Sciatic nerve (tissue), 2 donors: ENCODE measurements at regions of chr19 and their contacts with region 1.

Region 1: DNA sequence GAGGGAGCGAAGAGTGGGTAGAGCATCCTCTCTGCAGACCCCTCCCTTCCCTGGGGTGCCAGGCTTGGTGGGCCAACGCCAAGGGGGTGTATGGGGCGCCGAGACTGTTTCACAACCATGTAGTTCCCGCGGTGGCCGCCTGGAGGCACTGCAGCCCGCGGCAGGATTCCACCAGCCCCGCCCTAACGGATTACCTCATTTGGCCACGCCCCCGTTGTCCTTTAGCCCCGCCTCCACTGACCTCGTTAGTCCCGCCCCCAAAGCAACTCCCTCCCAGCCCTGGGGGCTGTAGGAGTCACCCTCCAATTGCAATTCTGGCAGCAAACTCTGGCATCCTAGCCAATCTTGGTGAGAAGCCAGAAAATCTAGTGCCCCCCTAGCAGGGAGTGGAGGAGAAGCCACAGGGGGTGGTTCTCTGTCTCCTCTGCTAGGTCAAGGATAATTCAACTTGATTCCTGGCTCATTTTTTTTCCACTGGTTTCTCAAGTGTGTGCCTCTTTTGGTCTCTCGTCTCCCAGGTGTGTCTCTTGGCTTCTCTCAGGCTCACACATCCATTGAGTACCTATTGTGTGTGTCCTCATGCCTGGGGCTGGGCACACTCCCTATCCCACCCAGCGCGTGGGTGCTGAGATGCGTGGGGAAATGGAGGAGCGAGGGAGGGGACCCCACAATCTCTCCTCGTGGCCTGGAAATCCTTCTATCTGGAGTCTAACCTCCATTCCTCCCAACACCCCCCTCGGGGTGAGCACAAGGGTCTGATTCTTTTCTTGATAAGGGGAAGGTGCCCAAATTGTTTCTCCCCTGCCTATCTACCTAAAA is 2.0 kb downstream of the OLFM2 start:
- DNase-seq: peak; percentile 90
- ATAC-seq: peak; percentile 89

Region 2: GRCh38 chr19:9498183-9498902 is 436.0 kb before region 1 on chr19 and contains the start of gene ZNF560:
- intact Hi-C with region 1: no loop called
- DNase-seq: no peak
- ATAC-seq: no peak
- total RNA-seq, gene ZNF560: not detected

Region 3: GRCh38 chr19:10027158-10027693 is 92.9 kb after region 1 on chr19:
- intact Hi-C with region 1: loop called (anchors 5 kb)
- DNase-seq: no peak
- ATAC-seq: peak; percentile 9

Region 4: DNA sequence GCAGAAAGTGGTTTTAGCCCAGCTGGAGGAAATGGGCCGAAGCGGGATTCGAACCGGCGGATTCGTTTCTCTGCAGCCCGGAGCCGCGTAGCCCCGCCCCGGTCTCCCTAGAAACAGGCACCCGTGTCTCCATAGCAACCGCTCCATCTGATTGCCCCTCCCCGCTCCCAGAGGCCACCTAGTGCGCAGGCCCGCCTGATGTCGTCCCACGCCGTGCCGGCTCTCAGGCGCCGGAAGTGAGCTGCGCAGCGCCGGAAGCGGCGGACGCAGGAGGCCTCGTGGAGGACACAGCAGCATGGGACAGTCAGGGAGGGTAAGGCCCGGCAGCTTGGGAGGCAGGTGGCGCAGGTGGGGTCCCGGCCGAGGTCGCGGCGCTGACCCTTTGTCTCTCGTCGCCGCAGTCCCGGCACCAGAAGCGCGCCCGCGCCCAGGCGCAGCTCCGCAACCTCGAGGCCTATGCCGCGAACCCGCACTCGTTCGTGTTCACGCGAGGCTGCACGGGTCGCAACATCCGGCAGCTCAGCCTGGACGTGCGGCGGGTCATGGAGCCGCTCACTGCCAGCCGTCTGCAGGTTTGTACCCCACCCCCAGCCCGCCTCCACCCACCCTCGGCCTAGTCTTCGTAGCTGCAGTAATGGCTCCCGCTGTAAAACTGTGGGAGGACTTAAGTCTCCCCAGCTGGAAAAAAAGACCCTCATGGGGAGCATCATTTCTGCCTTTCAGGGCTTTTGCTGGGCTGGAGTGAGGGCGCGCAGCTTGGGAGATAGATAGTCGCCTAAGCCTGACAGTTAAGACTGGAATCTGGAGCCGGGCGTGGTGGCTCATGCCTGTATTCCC is 172.0 kb after region 1 on chr19 and contains the start of gene PPAN:
- intact Hi-C with region 1: loop called (anchors 10 kb)
- DNase-seq: peak; percentile 99
- ATAC-seq: peak; percentile 99
- total RNA-seq, gene PPAN: 31.3 TPM

Region 5: DNA sequence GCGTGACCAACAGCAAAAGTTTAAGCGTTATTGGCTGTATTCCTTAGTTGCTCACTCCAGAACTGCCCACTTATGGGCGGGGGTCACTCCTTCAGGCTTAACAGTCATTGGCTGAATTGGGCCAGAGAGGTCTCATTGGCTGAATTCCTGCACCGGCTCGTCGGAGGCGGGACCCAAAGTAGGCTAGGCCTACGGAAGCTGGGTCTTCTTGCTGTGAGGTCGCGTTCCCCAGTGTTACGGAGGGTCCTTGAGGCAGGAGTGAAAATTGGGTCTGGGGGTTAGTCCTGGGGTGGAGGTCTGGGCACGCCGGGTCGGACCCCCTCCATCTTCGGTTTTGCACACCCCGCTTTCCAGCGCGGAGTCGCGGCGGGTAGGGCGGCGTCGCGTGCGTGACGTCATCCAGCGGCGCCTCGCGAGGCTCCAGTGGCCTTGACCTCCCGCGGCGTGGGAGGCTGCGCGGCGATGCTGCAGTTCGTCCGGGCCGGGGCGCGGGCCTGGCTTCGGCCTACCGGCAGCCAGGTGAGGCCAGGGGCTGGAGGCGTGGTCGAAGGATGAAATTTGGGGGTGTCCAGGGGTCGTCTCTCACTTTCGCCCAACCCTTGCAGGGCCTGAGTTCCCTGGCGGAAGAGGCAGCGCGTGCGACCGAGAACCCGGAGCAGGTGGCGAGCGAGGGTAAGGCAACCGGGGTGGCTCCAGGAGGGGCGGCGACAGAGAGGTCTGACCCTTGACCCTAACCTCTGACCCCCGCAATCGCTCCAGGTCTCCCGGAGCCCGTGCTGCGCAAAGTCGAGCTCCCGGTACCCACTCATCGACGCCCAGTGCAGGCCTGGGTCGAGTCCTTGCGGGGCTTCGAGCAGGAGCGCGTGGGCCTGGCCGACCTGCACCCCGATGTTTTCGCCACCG is 317.7 kb after region 1 on chr19 and contains the start of gene MRPL4:
- intact Hi-C with region 1: loop called (anchors 10 kb)
- DNase-seq: peak; percentile 96
- ATAC-seq: peak; percentile 97
- total RNA-seq, gene MRPL4: 29.3 TPM